ENCODE measurements at regions of chr21 and their contacts with region 1.

Region 1: GRCh38 chr21:28283641-28284490 is 708.8 kb downstream of the LTN1 start:
- DNase-seq: peak; percentile 97
- H3K4me3 ChIP-seq: peak overlapping the region in 1 of 3 experiments; percentile 17
- H3K27ac ChIP-seq: peak overlapping the region; percentile 79
- H3K4me1 ChIP-seq: peaks cover 21% of the 10 kb centered on the region
- H3K27me3 ChIP-seq: no peaks in the 10 kb centered on the region
- CTCF ChIP-seq: no peak
- POLR2A ChIP-seq: no peak

Region 2: GRCh38 chr21:27648560-27648959 is 635.3 kb before region 1 on chr21:
- CTCF ChIA-PET with region 1: no interaction called
- POLR2A ChIA-PET with region 1: no interaction called
- dilution Hi-C with region 1: no loop called
- intact Hi-C with region 1: loop called (anchors 2 kb)
- DNase-seq: peak; percentile 91
- H3K4me3 ChIP-seq: no peak overlapping the region
- H3K27ac ChIP-seq: peak overlapping the region; percentile 91
- H3K4me1 ChIP-seq: peaks cover 34% of the 10 kb centered on the region
- H3K27me3 ChIP-seq: no peaks in the 10 kb centered on the region
- CTCF ChIP-seq: no peak
- POLR2A ChIP-seq: no peak

Region 3: GRCh38 chr21:28229814-28230213 is 54.1 kb before region 1 on chr21:
- CTCF ChIA-PET with region 1: interaction called, 6 read pairs
- POLR2A ChIA-PET with region 1: no interaction called
- dilution Hi-C with region 1: no loop called
- intact Hi-C with region 1: loop called (anchors 1 kb)
- DNase-seq: peak; percentile 37
- H3K4me3 ChIP-seq: no peak overlapping the region
- H3K27ac ChIP-seq: peak overlapping the region; percentile 55
- H3K4me1 ChIP-seq: peaks cover 18% of the 10 kb centered on the region
- H3K27me3 ChIP-seq: no peaks in the 10 kb centered on the region
- CTCF ChIP-seq: no peak
- POLR2A ChIP-seq: no peak

Region 4: DNA sequence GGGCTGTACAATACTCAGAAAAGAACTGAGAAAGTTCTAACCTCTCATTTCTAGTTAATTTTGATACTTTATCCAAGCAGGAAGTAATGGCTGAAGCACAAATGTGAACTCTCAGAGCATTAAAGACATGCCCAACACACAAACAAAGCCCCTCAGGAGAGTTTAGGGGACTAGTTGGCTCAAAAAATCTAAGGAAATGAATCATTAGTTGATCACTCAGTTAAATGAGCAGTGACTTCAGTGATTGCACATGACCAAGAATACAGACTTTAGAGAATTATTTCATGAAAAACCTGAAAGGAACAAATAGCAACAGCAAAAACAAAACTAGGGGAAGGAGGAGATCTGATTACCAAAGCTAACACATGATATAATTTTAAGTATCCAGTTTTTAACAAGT is 27.9 kb after region 1 on chr21:
- CTCF ChIA-PET with region 1: interaction called, 3 read pairs
- POLR2A ChIA-PET with region 1: no interaction called
- dilution Hi-C with region 1: no loop called
- intact Hi-C with region 1: loop called (anchors 1 kb)
- DNase-seq: peak; percentile 42
- H3K4me3 ChIP-seq: no peak overlapping the region
- H3K27ac ChIP-seq: peak overlapping the region; percentile 34
- H3K4me1 ChIP-seq: peaks cover 12% of the 10 kb centered on the region
- H3K27me3 ChIP-seq: no peaks in the 10 kb centered on the region
- CTCF ChIP-seq: no peak
- POLR2A ChIP-seq: no peak

Region 5: GRCh38 chr21:28357743-28358142 is 73.9 kb after region 1 on chr21:
- CTCF ChIA-PET with region 1: no interaction called
- POLR2A ChIA-PET with region 1: no interaction called
- dilution Hi-C with region 1: no loop called
- intact Hi-C with region 1: no loop called
- DNase-seq: no peak
- H3K4me3 ChIP-seq: no peak overlapping the region
- H3K27ac ChIP-seq: no peak overlapping the region
- H3K4me1 ChIP-seq: no peaks in the 10 kb centered on the region
- H3K27me3 ChIP-seq: no peaks in the 10 kb centered on the region
- CTCF ChIP-seq: no peak
- POLR2A ChIP-seq: no peak

Region 6: DNA sequence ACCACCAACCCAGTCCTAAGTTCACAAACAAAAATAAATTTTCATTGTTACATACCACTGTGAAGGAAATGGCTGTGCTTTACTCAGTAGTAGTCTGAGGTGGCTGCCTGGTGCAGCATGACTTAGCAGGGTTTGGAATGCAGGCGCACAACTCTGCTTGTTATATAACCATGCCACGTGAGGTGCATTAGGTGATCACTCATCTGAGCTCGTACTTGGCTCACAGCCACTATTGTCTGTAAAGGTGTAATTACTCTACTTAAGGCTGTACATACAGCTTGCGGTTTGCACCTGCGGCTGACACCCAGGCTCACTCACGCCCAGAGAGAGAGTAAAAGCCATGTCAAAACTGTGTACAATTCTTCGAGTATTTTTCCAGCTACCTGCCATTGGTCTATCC is 109.4 kb after region 1 on chr21:
- CTCF ChIA-PET with region 1: no interaction called
- POLR2A ChIA-PET with region 1: no interaction called
- dilution Hi-C with region 1: no loop called
- intact Hi-C with region 1: no loop called
- DNase-seq: no peak
- H3K4me3 ChIP-seq: no peak overlapping the region
- H3K27ac ChIP-seq: no peak overlapping the region
- H3K4me1 ChIP-seq: no peaks in the 10 kb centered on the region
- H3K27me3 ChIP-seq: no peaks in the 10 kb centered on the region
- CTCF ChIP-seq: no peak
- POLR2A ChIP-seq: no peak

Region 7: GRCh38 chr21:28537371-28538079 is 253.7 kb after region 1 on chr21:
- CTCF ChIA-PET with region 1: no interaction called
- POLR2A ChIA-PET with region 1: no interaction called
- dilution Hi-C with region 1: no loop called
- intact Hi-C with region 1: loop called (anchors 5 kb)
- DNase-seq: peak; percentile 82
- H3K4me3 ChIP-seq: no peak overlapping the region
- H3K27ac ChIP-seq: no peak overlapping the region
- H3K4me1 ChIP-seq: peaks cover 37% of the 10 kb centered on the region
- H3K27me3 ChIP-seq: no peaks in the 10 kb centered on the region
- CTCF ChIP-seq: no peak
- POLR2A ChIP-seq: no peak